CD14-positive monocyte (primary cell): ENCODE measurements at regions of chr12 and their contacts with region 1.

Region 1: DNA sequence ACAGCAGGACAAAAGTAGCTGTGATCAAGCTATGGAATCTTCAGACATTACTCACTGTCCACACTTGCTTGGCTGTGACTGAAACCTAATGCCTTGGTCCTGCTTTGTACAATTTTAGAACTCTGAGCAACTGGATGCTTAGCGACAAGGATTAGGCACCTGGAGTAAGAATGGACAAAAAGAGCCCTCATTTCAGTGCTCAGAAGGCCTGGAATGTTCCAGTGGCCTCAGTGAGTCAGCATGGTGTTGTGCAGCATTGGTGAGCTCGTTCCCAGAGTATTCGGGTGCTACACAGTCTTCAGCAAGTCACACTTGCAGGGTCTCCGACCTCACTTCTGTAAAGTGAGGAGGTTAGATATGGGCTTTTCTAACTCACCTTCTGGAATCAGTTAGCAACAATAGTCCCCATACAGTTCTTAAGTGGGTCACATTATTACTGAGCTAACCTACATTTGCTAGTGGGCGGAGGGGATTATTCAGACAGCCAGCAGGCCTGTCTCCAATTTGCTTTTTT is 108.0 kb upstream of the MDM1 start:
- DNase-seq: no peak
- H3K4me3 ChIP-seq: no peak overlapping the region
- H3K4me3 Mint-ChIP-seq: no peak overlapping the region
- H3K27ac ChIP-seq: no peak overlapping the region
- H3K27ac Mint-ChIP-seq: no peak overlapping the region
- H3K4me1 ChIP-seq: no peaks in the 10 kb centered on the region
- H3K4me1 Mint-ChIP-seq: peaks cover 5% of the 10 kb centered on the region
- H3K27me3 ChIP-seq: no peaks in the 10 kb centered on the region
- H3K27me3 Mint-ChIP-seq: no peaks in the 10 kb centered on the region
- CTCF ChIP-seq: no peak

Region 2: GRCh38 chr12:68358532-68359485 is 81.3 kb before region 1 on chr12:
- intact Hi-C with region 1: loop called in 1 of 2 experiments (anchors 10 kb)
- DNase-seq: peak; percentile 79 to 93 (median 85)
- H3K4me3 ChIP-seq: peak overlapping the region in 1 of 3 experiments; percentile 36
- H3K4me3 Mint-ChIP-seq: peak overlapping the region; percentile 7 to 61
- H3K27ac ChIP-seq: peak overlapping the region; percentile 81 to 99
- H3K27ac Mint-ChIP-seq: peak overlapping the region; percentile 98 to 100 (median 99)
- H3K4me1 ChIP-seq: peaks cover 50 to 69% of the 10 kb centered on the region in 2 donors
- H3K4me1 Mint-ChIP-seq: peaks cover 50% of the 10 kb centered on the region
- H3K27me3 ChIP-seq: no peaks in the 10 kb centered on the region
- H3K27me3 Mint-ChIP-seq: no peaks in the 10 kb centered on the region
- CTCF ChIP-seq: peak; percentile 63